Activated CD8-positive, alpha-beta T cell treated with anti-CD3 and anti-CD28 coated beads for 36 hours (primary cell): ENCODE measurements at regions of chr12 and their contacts with region 1.

Region 1: GRCh38 chr12:53321074-53321814 is at the start of gene AAAS:
- DNase-seq: peak; percentile 99
- ATAC-seq: peak; percentile 87
- H3K4me3 Mint-ChIP-seq: peak within 1 kb of the TSS; percentile 83
- H3K27ac Mint-ChIP-seq: peak within 1 kb of the TSS; percentile 96
- H3K4me1 Mint-ChIP-seq: peaks cover 41% of the 10 kb centered on the region
- H3K27me3 Mint-ChIP-seq: no peaks in the 10 kb centered on the region
- CTCF ChIP-seq: peak; percentile 100
- total RNA-seq, gene AAAS: 81.3 to 87.6 TPM

Region 2: GRCh38 chr12:53014709-53015108 is 306.5 kb before region 1 on chr12:
- CTCF ChIA-PET with region 1: no interaction called
- POLR2A ChIA-PET with region 1: no interaction called
- intact Hi-C with region 1: no loop called
- DNase-seq: no peak
- ATAC-seq: peak; percentile 30
- H3K4me3 Mint-ChIP-seq: no peak overlapping the region
- H3K27ac Mint-ChIP-seq: peak overlapping the region; percentile 77
- H3K4me1 Mint-ChIP-seq: peaks cover 52% of the 10 kb centered on the region
- H3K27me3 Mint-ChIP-seq: no peaks in the 10 kb centered on the region
- CTCF ChIP-seq: no peak

Region 3: DNA sequence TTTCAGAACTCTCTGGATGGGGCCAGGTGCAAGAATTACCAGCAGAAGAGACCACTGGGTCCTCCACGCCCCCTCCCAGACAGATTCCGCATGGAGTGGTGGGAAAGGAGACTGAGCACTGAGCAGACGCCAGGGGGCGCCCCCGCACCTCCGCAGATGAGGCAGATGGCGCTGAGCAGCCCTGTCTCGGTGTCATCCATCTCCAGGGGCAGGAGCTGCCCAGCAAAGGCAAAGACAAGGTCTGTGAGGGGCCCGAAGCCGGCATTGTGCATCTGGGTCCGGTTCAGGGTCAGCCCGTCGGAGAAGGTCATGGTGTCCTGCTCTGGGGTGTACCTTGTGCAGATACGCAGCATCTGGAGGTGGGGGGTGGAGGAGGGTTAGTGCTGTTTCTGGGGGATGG is 107.9 kb before region 1 on chr12:
- CTCF ChIA-PET with region 1: interaction called, 124 read pairs
- POLR2A ChIA-PET with region 1: interaction called, 4 read pairs
- intact Hi-C with region 1: no loop called
- DNase-seq: peak; percentile 90
- ATAC-seq: peak; percentile 63
- H3K4me3 Mint-ChIP-seq: no peak overlapping the region
- H3K27ac Mint-ChIP-seq: no peak overlapping the region
- H3K4me1 Mint-ChIP-seq: peaks cover 68% of the 10 kb centered on the region
- H3K27me3 Mint-ChIP-seq: no peaks in the 10 kb centered on the region
- CTCF ChIP-seq: peak; percentile 97

Region 4: DNA sequence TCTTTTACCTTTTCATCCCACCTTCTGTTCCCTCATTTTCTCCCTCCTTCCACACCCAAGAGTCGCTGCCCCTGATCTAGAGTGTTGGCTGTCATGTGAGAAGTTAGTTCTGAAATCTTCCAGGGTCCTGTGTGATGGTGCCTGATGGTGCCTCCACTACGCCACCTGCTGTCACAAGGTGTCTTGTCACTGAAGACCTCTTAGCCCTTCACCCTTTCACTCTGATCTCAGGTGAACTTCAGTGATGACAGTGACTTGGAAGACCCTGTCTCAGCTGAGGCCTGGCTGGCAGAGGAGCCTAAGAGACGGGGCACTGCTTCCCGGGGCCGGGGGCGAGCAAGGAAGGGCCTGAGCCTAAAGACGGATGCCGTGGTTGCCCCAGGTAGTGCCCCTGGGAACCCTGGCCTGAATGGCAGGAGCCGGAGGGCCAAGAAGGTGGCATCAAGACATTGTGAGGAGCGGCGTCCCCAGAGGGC is 33.5 kb before region 1 on chr12:
- CTCF ChIA-PET with region 1: interaction called, 143 read pairs
- POLR2A ChIA-PET with region 1: interaction called, 6 read pairs
- intact Hi-C with region 1: no loop called
- DNase-seq: peak; percentile 80
- ATAC-seq: peak; percentile 85
- H3K4me3 Mint-ChIP-seq: no peak overlapping the region
- H3K27ac Mint-ChIP-seq: no peak overlapping the region
- H3K4me1 Mint-ChIP-seq: peaks cover 17% of the 10 kb centered on the region
- H3K27me3 Mint-ChIP-seq: no peaks in the 10 kb centered on the region
- CTCF ChIP-seq: peak; percentile 57

Region 5: DNA sequence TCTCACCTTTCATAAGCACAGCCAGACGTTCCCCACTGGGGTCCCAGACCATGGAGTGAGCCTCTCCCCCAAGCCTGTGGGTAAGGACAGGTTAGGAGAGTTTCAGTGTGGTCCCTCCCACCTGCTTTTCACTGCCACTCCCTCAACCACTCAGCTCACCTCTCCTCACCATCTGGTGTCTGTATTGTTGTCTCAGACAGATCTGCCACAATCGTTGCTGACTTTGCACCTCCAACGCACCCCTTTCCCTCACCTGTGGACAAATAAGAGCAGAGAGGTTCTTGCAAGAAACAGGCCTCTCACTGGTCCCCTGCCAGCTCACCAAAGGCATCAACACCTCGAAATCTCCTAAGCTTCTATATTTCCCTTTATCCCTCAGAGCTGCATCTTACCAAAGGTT is 13.0 kb before region 1 on chr12:
- CTCF ChIA-PET with region 1: interaction called, 143 read pairs
- POLR2A ChIA-PET with region 1: interaction called, 12 read pairs
- intact Hi-C with region 1: no loop called
- DNase-seq: no peak
- ATAC-seq: no peak
- H3K4me3 Mint-ChIP-seq: no peak overlapping the region
- H3K27ac Mint-ChIP-seq: peak overlapping the region; percentile 35
- H3K4me1 Mint-ChIP-seq: peaks cover 1% of the 10 kb centered on the region
- H3K27me3 Mint-ChIP-seq: no peaks in the 10 kb centered on the region
- CTCF ChIP-seq: no peak

Region 6: DNA sequence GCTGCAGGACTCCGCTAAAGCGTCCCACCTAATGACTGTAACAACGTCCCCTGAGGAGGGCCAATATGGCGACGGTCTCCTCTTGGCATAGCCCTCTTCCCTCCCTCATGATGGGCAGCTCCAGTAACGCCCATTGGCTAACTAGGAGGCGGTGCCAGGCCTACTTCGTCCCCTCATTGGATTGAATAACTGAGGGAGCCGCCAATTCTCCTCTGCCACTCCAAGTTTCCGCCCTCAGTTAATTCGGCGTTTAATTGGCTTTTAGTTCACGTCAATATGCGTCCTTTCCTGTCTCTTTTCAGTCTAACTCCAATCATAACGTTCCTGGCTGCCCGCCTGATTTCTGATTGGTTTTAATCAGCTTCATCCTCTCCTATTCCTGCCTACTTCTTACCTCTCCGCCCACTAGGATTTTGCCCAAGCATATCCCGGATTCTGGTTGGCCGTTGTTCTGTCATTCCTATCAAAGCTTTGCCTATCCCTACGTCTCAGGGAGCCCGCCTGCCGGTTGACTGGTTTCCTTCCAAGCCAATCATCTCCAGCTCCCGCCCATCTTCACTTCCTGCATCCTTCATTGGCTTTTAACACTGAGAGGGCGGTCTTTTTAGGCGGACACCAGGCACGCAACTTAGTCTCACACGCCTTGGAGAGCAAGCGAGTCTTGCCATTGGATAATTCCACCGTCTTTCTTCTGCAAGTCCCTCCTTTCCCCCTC is 58.3 kb after region 1 on chr12:
- CTCF ChIA-PET with region 1: interaction called, 15 read pairs
- POLR2A ChIA-PET with region 1: interaction called, 4 read pairs
- intact Hi-C with region 1: no loop called
- DNase-seq: peak; percentile 99
- ATAC-seq: peak; percentile 76
- H3K4me3 Mint-ChIP-seq: no peak overlapping the region
- H3K27ac Mint-ChIP-seq: no peak overlapping the region
- H3K4me1 Mint-ChIP-seq: peaks cover 36% of the 10 kb centered on the region
- H3K27me3 Mint-ChIP-seq: no peaks in the 10 kb centered on the region
- CTCF ChIP-seq: no peak